A673 (cell line): ENCODE measurements at regions of chr5 and their contacts with region 1.

Region 1: DNA sequence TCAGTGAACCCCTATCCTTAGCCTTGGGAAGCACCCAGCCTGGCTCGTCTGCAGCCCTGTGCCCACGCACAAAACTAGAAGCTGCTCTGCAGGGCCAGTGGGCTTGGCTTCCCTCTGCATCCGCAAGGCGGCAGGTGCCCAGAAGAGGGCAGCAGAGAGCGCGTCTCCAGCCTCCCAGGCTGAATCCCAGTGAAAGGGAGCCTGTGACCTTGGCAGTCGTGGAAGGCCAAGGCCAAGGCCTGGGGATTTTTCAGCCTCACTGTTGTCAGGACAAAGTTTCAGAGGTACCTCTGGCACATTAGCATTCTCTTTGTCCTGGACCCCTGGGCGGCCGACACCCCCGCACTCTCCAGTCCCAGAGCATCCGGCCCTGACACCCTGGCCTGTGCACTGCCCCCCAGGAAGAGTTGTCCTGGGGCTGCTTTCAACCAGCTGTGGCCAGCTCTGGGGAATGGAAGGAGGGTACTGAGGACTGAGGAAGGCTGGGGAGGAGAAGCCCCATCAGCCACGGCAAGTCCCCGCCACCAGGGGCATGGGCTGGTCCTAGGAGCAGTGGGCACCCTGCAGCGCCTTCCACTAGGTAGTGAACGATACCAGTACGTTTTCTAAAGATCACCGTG is 63.6 kb upstream of the IL17B start:
- DNase-seq: peak; percentile 76
- H3K4me3 ChIP-seq: no peak overlapping the region
- H3K27ac ChIP-seq: no peak overlapping the region
- H3K4me1 ChIP-seq: no peaks in the 10 kb centered on the region
- H3K27me3 ChIP-seq: no peaks in the 10 kb centered on the region
- CTCF ChIP-seq: peak; percentile 93

Region 2: DNA sequence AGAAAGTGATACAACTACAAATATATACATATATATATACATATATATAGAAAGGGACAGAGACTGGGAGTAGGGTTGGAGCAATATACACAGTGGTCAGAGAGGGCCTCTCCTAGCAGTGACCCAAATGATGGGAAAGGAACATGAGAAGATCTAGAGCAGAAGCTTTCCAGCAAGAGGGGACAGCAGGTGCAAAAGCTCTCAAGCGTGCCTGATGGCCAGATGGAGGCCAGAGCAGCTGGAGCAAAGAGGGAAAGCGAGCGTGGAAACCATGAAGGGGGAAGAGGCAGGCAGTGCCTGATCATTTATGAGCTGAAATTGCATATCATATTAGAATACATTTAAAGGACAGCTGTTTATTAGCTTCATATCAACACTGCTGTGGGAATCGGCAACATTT is 104.9 kb before region 1 on chr5:
- CTCF ChIA-PET with region 1: no interaction called
- POLR2A ChIA-PET with region 1: no interaction called
- intact Hi-C with region 1: no loop called
- DNase-seq: no peak
- H3K4me3 ChIP-seq: no peak overlapping the region
- H3K27ac ChIP-seq: no peak overlapping the region
- H3K4me1 ChIP-seq: no peaks in the 10 kb centered on the region
- H3K27me3 ChIP-seq: peaks cover 29% of the 10 kb centered on the region
- CTCF ChIP-seq: no peak

Region 3: DNA sequence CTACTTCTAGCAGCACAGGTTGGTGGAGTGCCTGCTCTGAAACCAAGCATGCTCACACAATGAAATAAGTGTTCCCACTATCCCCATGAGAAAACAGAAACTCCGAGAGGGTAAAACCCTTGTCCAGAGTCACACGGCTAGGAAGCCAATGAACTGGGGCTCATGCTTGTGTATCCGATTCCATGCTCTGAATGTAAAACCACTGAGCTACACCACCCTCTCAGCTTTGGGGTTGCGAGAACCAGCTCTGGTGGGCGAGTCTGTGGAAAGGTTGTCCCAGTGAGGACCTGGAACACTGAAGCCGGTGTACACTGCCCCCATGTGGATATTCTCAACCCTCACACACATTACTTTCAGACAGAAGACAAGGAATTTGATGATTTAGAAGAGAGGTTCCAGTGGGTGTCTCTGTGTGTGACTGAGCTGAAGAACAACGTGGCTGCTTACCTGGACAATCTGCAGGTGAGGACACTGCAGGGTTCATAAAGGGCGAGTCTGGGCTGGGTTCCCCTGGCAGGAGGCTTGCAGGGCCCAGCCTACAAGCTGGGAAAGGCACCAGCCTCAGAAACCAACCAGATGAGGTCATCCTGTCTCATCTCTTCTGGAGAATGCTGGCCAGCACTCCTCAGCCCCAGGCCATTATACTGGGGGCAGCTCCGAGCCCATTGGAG is 176.0 kb after region 1 on chr5:
- CTCF ChIA-PET with region 1: interaction called, 4 read pairs
- POLR2A ChIA-PET with region 1: no interaction called
- intact Hi-C with region 1: loop called (anchors 5 kb)
- DNase-seq: peak; percentile 78
- H3K4me3 ChIP-seq: no peak overlapping the region
- H3K27ac ChIP-seq: no peak overlapping the region
- H3K4me1 ChIP-seq: no peaks in the 10 kb centered on the region
- H3K27me3 ChIP-seq: no peaks in the 10 kb centered on the region
- CTCF ChIP-seq: peak; percentile 85

Region 4: DNA sequence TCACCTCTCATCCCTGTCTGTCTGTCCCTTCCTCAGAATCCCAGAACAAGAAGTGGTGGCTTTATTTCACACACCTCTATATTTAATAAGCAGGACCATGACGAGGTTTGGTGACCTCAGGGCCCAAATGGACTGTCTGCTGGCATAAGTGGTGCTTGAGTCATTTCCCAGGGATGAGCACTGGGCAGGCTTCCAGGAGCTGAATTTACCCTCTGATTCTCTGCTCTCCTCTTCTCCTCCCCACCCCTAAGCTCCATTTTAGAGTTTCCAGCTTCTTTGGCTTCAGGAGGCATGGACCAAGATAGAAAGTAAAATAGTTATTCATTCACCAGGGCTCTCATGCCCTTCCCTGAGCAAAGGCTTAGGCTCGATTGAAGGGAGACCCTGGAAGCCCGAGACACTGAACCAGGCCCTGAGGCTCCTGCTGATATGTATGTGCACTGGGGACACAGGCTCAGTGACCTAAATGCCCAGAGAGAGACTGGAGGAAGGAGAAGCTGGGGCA is 356.5 kb after region 1 on chr5:
- CTCF ChIA-PET with region 1: no interaction called
- POLR2A ChIA-PET with region 1: no interaction called
- intact Hi-C with region 1: no loop called
- DNase-seq: peak; percentile 55
- H3K4me3 ChIP-seq: no peak overlapping the region
- H3K27ac ChIP-seq: no peak overlapping the region
- H3K4me1 ChIP-seq: peaks cover 7% of the 10 kb centered on the region
- H3K27me3 ChIP-seq: no peaks in the 10 kb centered on the region
- CTCF ChIP-seq: no peak